Left cardiac atrium (tissue), 4 donors: ENCODE measurements at regions of chr4 and their contacts with region 1.

Region 1: DNA sequence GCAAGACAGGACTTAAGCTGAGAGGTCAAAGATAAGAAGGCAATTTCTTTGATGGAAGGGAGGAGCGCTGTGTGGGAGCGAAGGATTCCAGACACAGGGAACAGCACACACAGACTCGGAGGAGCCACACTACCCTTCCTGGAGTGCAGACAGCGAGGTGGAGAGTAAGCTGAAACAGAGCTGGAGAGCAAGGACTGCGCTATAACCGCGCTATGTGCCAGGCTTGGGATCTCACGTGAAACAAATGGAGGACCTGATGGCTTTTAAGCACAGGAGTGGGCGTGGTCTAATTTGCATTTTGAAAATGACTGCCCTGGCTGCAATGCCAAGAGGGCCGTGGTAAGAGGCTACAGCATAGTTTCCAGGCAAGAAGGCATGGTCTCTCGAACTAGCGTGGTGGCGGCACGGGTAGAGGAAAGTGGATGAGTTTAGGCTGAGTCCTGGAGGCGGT is 113.9 kb upstream of the SORBS2 start:
- DNase-seq: peak; percentile 28
- ATAC-seq: peak; percentile 54 to 86

Region 2: DNA sequence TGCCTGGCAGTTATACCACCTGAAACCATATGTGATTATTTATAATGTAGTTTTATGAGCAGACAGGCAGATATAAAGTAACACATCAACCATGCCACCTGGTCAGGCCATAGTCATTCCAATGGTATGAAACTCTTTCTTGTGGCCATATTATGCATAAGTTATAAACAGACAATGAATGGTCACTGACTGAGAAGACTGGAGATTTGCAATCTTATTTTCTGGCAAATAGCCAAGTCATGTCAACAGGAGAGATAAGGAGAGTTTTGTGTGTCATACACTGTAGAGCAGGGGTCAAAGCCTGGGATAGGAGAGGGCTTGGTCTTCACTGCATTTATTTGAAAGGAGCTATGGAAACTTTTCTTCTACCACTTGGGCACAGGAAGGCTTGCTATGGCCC is 143.4 kb before region 1 on chr4:
- intact Hi-C with region 1: no loop called
- DNase-seq: no peak
- ATAC-seq: peak; percentile 28 to 35

Region 3: GRCh38 chr4:185997296-185997695 is 71.4 kb after region 1 on chr4:
- intact Hi-C with region 1: loop called in 1 of 2 experiments (anchors 5 kb)
- DNase-seq: no peak
- ATAC-seq: peak; percentile 78 to 87